ENCODE measurements at regions of chr4 and their contacts with region 1.

Region 1: GRCh38 chr4:55386073-55386472 is 9.7 kb upstream of the TMEM165 start:
- DNase-seq: peak; percentile 25
- H3K4me3 ChIP-seq: no peak overlapping the region
- H3K27ac ChIP-seq: no peak overlapping the region
- H3K4me1 ChIP-seq: no peaks in the 10 kb centered on the region
- H3K27me3 ChIP-seq: no peaks in the 10 kb centered on the region
- CTCF ChIP-seq: no peak

Region 2: DNA sequence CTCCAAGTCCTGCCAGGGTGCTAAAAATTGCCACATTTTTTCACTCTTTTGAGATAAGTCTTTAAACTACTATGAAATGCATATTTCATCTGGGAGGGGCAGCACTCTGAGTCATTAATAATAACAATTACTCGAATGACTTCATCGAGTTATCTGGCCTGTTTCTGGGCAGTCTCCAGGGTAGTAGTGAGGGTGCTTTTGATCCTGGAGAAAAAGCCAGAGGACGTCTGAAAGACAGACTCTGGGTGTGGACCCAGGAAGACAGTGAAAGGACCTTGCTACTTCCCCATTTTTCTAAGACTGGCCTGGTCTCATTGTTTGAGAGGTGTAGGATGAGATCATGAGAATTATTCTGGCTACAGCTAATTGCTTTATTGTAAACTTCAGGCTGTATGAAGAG is 82.3 kb before region 1 on chr4:
- CTCF ChIA-PET with region 1: no interaction called
- dilution Hi-C with region 1: no loop called
- in situ Hi-C with region 1: no loop called
- intact Hi-C with region 1: no loop called
- DNase-seq: peak; percentile 74
- H3K4me3 ChIP-seq: no peak overlapping the region
- H3K27ac ChIP-seq: peak overlapping the region; percentile 39
- H3K4me1 ChIP-seq: peaks cover 11% of the 10 kb centered on the region
- H3K27me3 ChIP-seq: no peaks in the 10 kb centered on the region
- CTCF ChIP-seq: no peak

Region 3: DNA sequence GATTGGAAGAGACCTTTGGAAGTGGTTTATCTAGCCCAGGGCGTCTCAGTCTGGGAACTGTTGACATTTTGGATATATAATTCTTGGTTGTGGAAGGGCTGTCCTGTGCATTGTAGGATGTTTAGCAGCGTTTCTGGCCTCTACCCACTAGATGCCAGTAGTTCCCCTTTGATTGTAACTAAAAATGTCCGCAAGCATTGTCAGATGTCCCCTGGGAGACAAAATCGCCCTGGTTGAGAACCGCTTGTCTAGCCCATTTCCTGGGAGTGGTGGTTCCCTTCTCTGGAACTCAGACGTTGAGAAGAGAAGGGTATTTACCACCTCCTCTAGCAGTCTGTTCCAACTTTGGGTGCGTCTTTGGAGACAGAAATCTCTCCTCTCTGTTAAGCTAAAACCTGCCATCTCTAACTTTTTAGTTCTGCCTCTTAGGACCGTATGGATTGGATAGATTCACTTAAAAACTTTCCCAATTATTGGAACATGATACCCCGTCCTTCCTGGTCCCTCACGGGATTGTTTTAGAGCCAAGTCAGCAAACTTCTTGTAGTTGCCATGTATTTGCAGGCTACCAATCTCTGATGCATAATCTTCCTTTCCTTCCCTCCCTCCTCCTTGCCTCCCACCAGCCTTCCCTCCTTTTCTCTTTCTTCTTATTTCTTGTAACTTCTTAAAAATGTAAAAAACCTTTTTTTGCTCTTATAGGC is 23.5 kb after region 1 on chr4:
- CTCF ChIA-PET with region 1: interaction called, 17 read pairs
- dilution Hi-C with region 1: no loop called
- in situ Hi-C with region 1: no loop called
- intact Hi-C with region 1: no loop called
- DNase-seq: no peak
- H3K4me3 ChIP-seq: no peak overlapping the region
- H3K27ac ChIP-seq: no peak overlapping the region
- H3K4me1 ChIP-seq: no peaks in the 10 kb centered on the region
- H3K27me3 ChIP-seq: no peaks in the 10 kb centered on the region
- CTCF ChIP-seq: no peak

Measured in mammary epithelial cell (primary cell).